Adrenal gland (tissue), 19 donors: ENCODE measurements at regions of chr10 and their contacts with region 1.

Region 1: GRCh38 chr10:92816091-92816531 is 32.2 kb upstream of the EXOC6 start:
- DNase-seq: no peak
- H3K4me3 ChIP-seq: no peak overlapping the region
- H3K27ac ChIP-seq: no peak overlapping the region
- H3K4me1 ChIP-seq: no peaks in the 10 kb centered on the region
- H3K27me3 ChIP-seq: no peaks in the 10 kb centered on the region
- CTCF ChIP-seq: peak in 1 of 6 experiments; percentile 11
- POLR2A ChIP-seq: no peak

Region 2: GRCh38 chr10:92689663-92690210 is 126.4 kb before region 1 on chr10 and contains the start of gene HHEX:
- intact Hi-C with region 1: loop called in 1 of 2 experiments (anchors 10 kb)
- DNase-seq: peak; percentile 72 to 84 (median 75)
- H3K4me3 ChIP-seq: peak within 1 kb of the TSS; percentile 46 to 87 (median 78)
- H3K27ac ChIP-seq: peak within 1 kb of the TSS; percentile 91 to 97 (median 93)
- H3K4me1 ChIP-seq: peaks cover 22 to 27% of the 10 kb centered on the region in 2 donors
- H3K27me3 ChIP-seq: no peaks in the 10 kb centered on the region
- CTCF ChIP-seq: peak in 1 of 6 experiments; percentile 28
- POLR2A ChIP-seq: peak; percentile 88 to 96
- total RNA-seq, gene HHEX: 10.2 to 49.3 (median 25.5) TPM

Region 3: DNA sequence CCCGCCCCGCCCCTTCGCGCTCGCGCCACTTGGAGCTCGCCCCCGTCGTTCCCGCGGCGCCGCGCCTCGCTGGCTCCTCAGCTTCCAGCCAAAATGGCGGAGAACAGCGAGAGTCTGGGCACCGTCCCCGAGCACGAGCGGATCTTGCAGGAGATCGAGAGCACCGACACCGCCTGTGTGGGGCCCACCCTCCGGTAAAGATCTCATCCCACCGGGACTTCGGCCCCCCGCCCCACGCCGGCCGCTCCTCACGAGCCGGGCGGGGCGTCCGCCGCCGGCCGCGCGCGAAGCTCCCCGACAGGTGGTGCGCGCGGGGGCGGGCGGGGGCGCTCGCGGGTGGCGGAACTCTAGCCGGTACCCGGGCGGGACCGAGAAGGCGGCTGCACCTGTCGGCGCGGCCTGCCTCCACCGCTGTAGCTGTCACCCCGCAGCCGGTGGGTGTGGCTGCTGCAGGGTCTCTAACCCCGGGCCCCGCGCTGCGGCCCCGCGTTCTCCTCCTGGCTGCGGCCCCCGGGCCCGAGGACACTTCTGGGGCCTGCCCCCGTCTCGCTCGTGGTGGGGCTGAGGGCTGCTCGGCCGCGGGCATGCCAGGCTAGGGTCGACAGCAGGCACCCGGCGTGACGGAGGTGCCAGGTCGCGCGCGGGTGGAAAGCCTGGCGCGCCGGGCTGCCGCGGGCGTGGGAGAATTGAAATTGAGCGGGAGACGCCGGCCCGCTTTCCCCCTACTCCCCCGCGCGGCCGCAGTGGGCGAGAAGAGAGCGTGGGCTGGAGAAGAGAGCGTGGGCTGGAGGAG is 32.5 kb after region 1 on chr10 and contains the start of gene EXOC6:
- intact Hi-C with region 1: no loop called
- DNase-seq: peak; percentile 74 to 86 (median 81)
- H3K4me3 ChIP-seq: peak within 1 kb of the TSS; percentile 74 to 94 (median 90)
- H3K27ac ChIP-seq: peak within 1 kb of the TSS in 4 of 5 donors; percentile 75 to 93 (median 86)
- H3K4me1 ChIP-seq: peaks cover 0 to 18% of the 10 kb centered on the region in 2 donors
- H3K27me3 ChIP-seq: no peaks in the 10 kb centered on the region
- CTCF ChIP-seq: no peak
- POLR2A ChIP-seq: no peak
- total RNA-seq, gene EXOC6: 14.2 to 60.1 (median 28.3) TPM

Region 4: GRCh38 chr10:92873029-92873428 is 56.9 kb after region 1 on chr10:
- intact Hi-C with region 1: no loop called
- DNase-seq: no peak
- H3K4me3 ChIP-seq: no peak overlapping the region
- H3K27ac ChIP-seq: no peak overlapping the region
- H3K4me1 ChIP-seq: peaks cover 4 to 5% of the 10 kb centered on the region in 2 donors
- H3K27me3 ChIP-seq: no peaks in the 10 kb centered on the region
- CTCF ChIP-seq: no peak
- POLR2A ChIP-seq: no peak

Region 5: GRCh38 chr10:93352638-93353383 is 536.7 kb after region 1 on chr10:
- intact Hi-C with region 1: no loop called
- DNase-seq: no peak
- H3K4me3 ChIP-seq: no peak overlapping the region
- H3K27ac ChIP-seq: no peak overlapping the region
- H3K4me1 ChIP-seq: no peaks in the 10 kb centered on the region
- H3K27me3 ChIP-seq: no peaks in the 10 kb centered on the region
- CTCF ChIP-seq: peak; percentile 58 to 77 (median 70)
- POLR2A ChIP-seq: no peak